ENCODE measurements at regions of chr9 and their contacts with region 1.

Region 1: DNA sequence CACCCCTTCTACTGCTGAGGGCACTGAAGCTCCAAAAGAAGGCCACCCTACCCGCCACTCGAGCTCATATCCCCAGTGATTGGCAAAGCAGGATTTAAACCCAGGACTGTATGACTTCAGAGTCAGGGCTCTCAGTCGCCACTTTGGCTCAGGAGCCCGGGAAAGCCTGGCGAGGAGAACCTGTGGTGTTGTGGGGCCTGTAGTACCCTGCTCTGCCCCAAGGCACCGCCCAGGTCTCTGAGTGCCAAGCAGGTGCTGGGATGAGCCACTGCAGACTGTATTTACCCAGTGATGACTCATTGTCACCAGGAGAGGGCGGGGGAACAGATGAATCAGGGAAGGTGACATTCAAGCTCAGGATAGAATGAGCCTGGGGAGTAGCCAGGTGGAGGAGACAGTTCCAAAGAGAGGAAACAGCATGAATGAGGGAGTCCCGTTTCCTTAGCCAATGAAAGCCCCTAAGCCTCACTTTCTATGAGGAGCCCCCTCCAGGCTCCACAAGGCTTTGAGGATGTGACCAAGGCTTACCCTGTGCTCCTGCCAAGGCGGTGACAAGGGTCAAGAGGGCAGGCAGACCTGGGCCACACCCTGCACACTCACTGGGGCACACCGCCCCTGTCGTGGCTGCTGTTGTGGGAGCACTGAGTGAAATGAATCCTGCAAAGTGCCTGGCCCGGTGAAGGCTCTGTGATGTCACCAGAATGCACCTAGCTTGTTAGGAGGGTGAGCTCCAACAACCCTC is 17.8 kb upstream of the DPM2 start:
- DNase-seq: peak; percentile 63 to 87 (median 64)
- H3K4me3 ChIP-seq: peak overlapping the region; percentile 42
- H3K4me3 Mint-ChIP-seq: peak overlapping the region; percentile 1 to 71 (median 57)
- H3K27ac ChIP-seq: no peak overlapping the region
- H3K27ac Mint-ChIP-seq: peak overlapping the region; percentile 28 to 89 (median 76)
- H3K4me1 ChIP-seq: peaks cover 97% of the 10 kb centered on the region
- H3K4me1 Mint-ChIP-seq: peaks cover 72 to 92% (median 82%) of the 10 kb centered on the region in 3 donors
- H3K27me3 ChIP-seq: no peaks in the 10 kb centered on the region
- H3K27me3 Mint-ChIP-seq: no peaks in the 10 kb centered on the region

Region 2: DNA sequence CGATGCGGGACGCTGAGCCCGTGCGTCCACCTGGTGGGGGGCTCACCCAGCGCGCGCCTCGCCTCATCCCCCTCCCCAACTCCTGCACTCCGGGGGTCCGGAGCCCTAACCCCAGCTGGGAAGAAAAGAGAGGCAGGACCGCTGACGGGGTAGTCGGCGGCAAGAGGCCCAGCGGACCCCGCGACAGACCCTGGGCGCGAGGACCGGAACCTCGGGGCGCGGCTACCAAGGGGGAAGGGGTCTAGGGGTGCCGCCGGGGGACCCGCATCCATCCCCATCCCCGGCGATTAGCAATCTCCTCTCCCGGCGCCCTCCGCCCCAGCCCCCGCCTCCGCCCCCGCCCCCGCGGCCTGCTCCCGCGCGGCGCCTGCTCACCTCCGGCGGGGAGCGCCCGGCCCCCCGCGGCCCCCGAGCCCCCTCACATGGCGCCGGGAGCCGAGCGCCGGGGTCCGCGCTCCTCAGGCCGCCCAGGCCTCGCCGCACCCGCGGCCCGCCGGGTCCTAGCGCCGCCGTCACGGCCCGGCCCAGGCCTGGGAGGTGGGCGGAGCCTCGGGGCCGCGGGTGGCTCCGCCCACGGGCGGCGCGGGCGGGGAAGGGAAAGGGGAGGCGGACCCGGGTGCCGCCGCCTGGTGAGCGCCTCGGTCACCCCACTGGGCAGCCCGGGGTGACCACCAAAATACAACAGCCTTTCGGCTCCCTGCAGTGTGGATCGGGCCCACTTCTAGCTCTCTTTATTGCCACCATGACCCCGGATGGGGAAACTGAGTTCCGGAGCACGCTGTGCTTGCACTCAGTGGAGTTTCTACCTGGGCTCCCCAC is 56.1 kb before region 1 on chr9 and contains the start of gene ST6GALNAC6:
- CTCF ChIA-PET with region 1: no interaction called
- POLR2A ChIA-PET with region 1: no interaction called
- DNase-seq: peak; percentile 63 to 73 (median 67)
- H3K4me3 ChIP-seq: peak within 1 kb of the TSS; percentile 55
- H3K4me3 Mint-ChIP-seq: peak within 1 kb of the TSS; percentile 83 to 91 (median 89)
- H3K27ac ChIP-seq: peak within 1 kb of the TSS; percentile 47
- H3K27ac Mint-ChIP-seq: peak within 1 kb of the TSS; percentile 70 to 97 (median 91)
- H3K4me1 ChIP-seq: peaks cover 44% of the 10 kb centered on the region
- H3K4me1 Mint-ChIP-seq: peaks cover 42 to 71% (median 49%) of the 10 kb centered on the region in 3 donors
- H3K27me3 ChIP-seq: no peaks in the 10 kb centered on the region
- H3K27me3 Mint-ChIP-seq: no peaks in the 10 kb centered on the region
- total RNA-seq, gene ST6GALNAC6: 52.3 to 54.0 TPM

Region 3: DNA sequence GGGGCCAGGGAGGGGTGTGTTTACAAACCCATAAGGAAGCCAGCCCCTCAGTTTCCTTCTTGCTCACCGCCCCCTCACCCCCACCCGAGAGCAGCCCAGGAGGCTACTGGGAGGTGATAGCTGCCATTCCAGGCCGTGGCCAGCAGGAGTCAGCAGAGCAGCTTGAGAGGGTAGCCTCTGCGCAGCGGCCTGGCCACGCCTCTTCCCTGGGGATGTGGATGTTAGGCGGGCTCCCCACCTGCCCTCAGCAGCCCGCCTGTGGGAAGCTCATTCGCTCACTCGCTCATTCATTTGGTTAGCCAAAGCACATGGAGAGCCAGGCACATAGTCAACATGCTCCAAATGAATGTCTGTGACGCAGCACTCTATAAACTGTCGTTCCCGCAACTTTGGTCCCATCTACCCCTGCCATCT is 11.7 kb before region 1 on chr9:
- CTCF ChIA-PET with region 1: interaction called, 63 read pairs
- POLR2A ChIA-PET with region 1: interaction called, 4 read pairs
- DNase-seq: peak; percentile 62 to 82 (median 66)
- H3K4me3 ChIP-seq: no peak overlapping the region
- H3K4me3 Mint-ChIP-seq: peak overlapping the region in 3 of 7 donors; percentile 17 to 36 (median 18)
- H3K27ac ChIP-seq: no peak overlapping the region
- H3K27ac Mint-ChIP-seq: peak overlapping the region in 7 of 8 donors; percentile 30 to 83 (median 66)
- H3K4me1 ChIP-seq: peaks cover 32% of the 10 kb centered on the region
- H3K4me1 Mint-ChIP-seq: peaks cover 15 to 36% (median 21%) of the 10 kb centered on the region in 3 donors
- H3K27me3 ChIP-seq: no peaks in the 10 kb centered on the region
- H3K27me3 Mint-ChIP-seq: no peaks in the 10 kb centered on the region

Region 4: DNA sequence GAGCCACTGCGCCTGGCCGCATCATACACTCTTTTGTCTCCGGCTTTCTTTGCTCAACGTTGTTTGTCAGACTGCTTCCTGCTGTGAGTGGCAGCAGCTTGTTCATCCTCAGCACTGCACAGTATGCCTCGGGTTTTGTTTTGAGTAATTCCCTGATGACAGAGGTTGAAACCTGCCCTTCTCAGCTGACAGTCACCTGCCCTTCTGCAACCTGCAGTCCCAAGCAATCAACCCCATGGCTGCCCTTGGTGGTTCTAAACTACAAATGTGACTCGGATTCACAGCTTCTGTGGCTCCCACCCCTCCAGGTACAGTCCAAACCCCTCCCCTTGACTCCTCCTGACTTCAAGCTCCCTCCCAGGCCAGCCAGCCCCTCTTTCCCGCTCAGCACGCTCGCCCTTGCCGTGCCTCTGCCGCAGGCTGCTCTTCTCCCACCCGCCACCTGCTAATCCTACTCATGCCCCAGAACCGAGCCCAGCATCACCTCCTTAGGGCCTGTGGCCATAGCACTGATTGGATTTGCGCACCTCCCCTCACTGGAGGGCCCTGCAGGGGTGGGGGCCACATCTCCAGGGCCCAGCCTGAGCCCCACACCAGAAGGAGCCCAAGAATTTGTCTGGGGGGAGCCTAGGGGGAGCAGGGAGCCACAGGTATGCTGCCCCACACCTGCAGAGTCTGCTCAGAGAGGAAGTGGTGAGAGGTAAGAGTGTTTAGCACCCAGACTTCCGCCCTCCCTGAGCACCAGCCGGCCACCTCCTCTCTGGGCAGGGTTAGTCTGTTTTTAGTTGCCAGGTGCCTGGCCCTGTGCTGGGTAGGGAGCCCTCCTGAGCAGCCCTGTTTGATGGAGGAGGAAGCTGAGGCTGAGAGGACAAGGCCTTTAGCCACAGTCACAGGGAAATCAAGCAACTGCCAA is 15.2 kb after region 1 on chr9:
- CTCF ChIA-PET with region 1: interaction called, 55 read pairs
- POLR2A ChIA-PET with region 1: interaction called, 10 read pairs
- DNase-seq: peak; percentile 36 to 84 (median 75)
- H3K4me3 ChIP-seq: peak overlapping the region; percentile 70
- H3K4me3 Mint-ChIP-seq: peak overlapping the region; percentile 85 to 99 (median 95)
- H3K27ac ChIP-seq: peak overlapping the region; percentile 55
- H3K27ac Mint-ChIP-seq: peak overlapping the region; percentile 87 to 100 (median 98)
- H3K4me1 ChIP-seq: peaks cover 99% of the 10 kb centered on the region
- H3K4me1 Mint-ChIP-seq: peaks cover 95 to 100% (median 100%) of the 10 kb centered on the region in 3 donors
- H3K27me3 ChIP-seq: no peaks in the 10 kb centered on the region
- H3K27me3 Mint-ChIP-seq: peaks cover 0 to 2% of the 10 kb centered on the region in 2 donors

Region 5: GRCh38 chr9:128007566-128008138 is 52.2 kb after region 1 on chr9:
- CTCF ChIA-PET with region 1: interaction called, 10 read pairs
- POLR2A ChIA-PET with region 1: interaction called, 3 read pairs
- DNase-seq: peak; percentile 75 to 96 (median 90)
- H3K4me3 ChIP-seq: peak overlapping the region; percentile 67
- H3K4me3 Mint-ChIP-seq: peak overlapping the region; percentile 65 to 92 (median 77)
- H3K27ac ChIP-seq: peak overlapping the region; percentile 53
- H3K27ac Mint-ChIP-seq: peak overlapping the region; percentile 91 to 99 (median 97)
- H3K4me1 ChIP-seq: peaks cover 76% of the 10 kb centered on the region
- H3K4me1 Mint-ChIP-seq: peaks cover 40 to 81% (median 54%) of the 10 kb centered on the region in 3 donors
- H3K27me3 ChIP-seq: no peaks in the 10 kb centered on the region
- H3K27me3 Mint-ChIP-seq: no peaks in the 10 kb centered on the region

Region 6: DNA sequence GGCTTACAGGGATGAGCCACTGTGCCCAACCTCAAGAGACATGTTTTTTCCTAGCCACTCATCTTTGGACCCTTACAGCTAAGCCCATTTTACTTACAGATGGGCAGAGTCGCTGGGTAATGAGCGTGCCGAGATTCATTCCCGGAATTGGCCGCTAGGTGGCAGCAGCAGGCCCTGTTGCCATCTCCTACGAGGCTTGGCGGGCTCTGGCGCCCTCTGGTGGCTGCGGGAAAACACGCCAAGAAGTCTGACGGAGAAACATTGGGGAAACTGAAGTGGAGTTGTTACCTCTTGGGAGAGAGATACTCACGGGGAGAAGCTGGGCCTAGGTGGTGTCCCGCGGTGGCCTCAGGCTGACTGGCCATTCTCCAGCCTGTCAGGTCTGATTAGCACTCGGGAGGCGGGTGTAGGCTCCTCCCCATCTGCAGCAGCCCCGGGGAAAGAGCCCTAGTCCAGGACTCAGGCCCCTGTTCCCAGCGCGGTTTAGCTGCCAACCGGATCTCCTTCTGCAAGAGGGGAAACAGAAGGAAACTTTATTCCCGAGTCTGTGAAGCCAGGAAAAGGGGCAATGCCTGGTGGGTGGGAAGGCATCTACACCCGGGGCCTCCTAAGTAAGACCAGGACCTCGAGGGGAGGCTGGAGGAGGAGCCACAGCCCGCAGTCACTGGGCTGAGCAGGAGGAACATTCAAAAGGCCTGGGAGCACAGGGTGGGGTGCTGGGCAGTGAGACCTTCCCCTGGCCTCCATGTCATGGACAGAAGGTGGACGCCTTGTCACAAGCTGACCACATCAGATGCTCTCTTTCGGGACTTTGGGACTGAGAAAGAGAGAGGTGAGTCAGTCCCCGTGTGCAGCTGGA is 162.4 kb after region 1 on chr9:
- CTCF ChIA-PET with region 1: interaction called, 18 read pairs
- POLR2A ChIA-PET with region 1: interaction called, 3 read pairs
- DNase-seq: peak; percentile 86 to 98 (median 95)
- H3K4me3 ChIP-seq: no peak overlapping the region
- H3K4me3 Mint-ChIP-seq: peak overlapping the region in 2 of 7 donors; percentile 26 to 55
- H3K27ac ChIP-seq: peak overlapping the region; percentile 25
- H3K27ac Mint-ChIP-seq: peak overlapping the region in 4 of 8 donors; percentile 21 to 84 (median 44)
- H3K4me1 ChIP-seq: peaks cover 11% of the 10 kb centered on the region
- H3K4me1 Mint-ChIP-seq: peaks cover 4 to 9% (median 6%) of the 10 kb centered on the region in 3 donors
- H3K27me3 ChIP-seq: no peaks in the 10 kb centered on the region
- H3K27me3 Mint-ChIP-seq: no peaks in the 10 kb centered on the region